ENCODE measurements at regions of chr5 and their contacts with region 1.

Region 1: DNA sequence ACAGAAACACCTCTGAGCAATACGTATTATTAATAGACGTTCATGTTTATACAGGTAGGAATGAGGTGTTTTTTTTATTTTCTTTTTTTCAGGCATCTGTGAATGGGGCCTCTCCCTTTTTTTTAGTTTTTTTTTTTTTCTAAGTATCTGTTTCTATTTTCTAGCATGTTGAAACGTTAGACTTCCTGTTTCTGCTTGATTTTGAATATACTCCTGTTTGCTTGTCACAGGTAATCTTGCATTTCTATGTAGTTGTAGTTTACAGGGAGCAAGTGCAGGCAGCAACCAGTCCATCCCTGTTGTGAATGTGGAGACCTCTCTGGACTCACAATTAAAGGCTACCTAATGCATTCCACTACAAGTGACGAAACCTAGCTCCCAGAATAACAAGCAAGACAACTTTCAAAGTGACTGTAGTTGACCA is 22.8 kb upstream of the TNFAIP8 start:
- DNase-seq: no peak
- ATAC-seq: no peak
- H3K4me3 ChIP-seq: no peak overlapping the region
- H3K27ac ChIP-seq: no peak overlapping the region
- H3K4me1 ChIP-seq: no peaks in the 10 kb centered on the region
- H3K27me3 ChIP-seq: no peaks in the 10 kb centered on the region
- CTCF ChIP-seq: no peak

Region 2: DNA sequence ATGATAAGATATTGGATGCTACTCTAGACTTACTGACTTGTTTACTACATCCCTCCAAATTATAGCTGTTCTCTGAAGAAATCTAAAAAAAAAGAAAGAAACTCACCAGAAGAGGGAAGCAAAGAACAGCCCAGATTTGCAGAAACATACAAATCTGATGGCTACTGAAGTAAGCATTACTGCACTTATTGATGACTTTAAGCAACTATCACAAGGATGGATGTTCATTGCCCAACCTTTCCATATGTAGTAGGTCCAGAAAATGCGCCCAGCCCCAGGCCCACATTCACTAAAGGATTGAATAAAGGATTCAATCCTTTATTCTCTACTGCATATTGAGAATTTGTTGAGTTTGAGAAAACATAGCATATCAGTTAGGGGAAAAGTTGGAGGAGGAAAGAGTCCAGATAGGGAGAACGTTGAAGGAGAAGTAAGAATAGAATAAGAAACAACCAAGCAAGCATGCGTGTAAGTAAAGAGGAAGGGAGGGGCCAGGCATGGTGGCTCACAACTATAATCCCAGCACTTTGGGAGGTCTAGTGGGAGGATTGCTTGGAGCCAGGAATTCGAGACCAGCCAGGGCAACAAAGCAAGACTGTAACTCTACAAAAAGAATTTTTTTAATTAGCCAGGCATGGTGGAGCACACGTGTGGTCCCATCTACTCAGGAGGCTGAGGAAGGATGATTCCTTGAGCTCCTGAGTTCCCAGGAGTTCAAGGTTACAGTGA is 310.8 kb before region 1 on chr5:
- CTCF ChIA-PET with region 1: interaction called, 6 read pairs
- POLR2A ChIA-PET with region 1: no interaction called
- in situ Hi-C with region 1: no loop called
- intact Hi-C with region 1: loop called (anchors 10 kb)
- DNase-seq: peak; percentile 30
- ATAC-seq: peak; percentile 60; the same call in 1 of the 2 replicates
- H3K4me3 ChIP-seq: no peak overlapping the region
- H3K27ac ChIP-seq: no peak overlapping the region
- H3K4me1 ChIP-seq: no peaks in the 10 kb centered on the region
- H3K27me3 ChIP-seq: no peaks in the 10 kb centered on the region
- CTCF ChIP-seq: peak; percentile 42; the same call in 1 of the 2 replicates

Region 3: DNA sequence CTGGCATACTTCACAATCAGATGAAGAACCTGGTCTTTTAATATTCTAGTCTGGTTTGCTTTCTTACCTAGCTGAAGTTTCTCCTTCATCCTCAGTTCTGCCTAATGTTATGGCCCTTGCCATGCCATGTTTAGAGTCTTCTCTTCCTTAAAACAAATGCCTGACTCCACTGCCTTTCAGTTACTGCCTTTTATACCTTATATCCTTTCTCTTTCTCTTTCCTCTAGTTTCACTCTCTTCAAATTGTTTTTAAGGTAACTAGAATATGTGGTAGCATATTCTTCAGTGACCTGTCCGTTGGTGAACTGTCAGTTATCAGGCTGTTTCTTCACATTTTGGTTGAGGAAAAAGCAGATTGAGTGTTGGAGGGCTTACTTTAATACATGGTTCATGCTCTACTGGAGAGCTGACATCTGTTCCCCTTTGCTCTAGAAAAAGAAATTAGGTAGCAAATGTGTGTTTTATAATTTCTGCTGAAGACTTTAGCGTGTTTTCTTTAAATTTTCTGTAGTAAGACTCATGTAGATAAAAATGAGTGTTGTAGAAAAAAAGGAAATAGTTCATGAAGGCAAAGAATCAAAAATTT is 158.3 kb before region 1 on chr5:
- CTCF ChIA-PET with region 1: no interaction called
- POLR2A ChIA-PET with region 1: no interaction called
- in situ Hi-C with region 1: no loop called
- intact Hi-C with region 1: no loop called
- DNase-seq: no peak
- ATAC-seq: no peak
- H3K4me3 ChIP-seq: no peak overlapping the region
- H3K27ac ChIP-seq: no peak overlapping the region
- H3K4me1 ChIP-seq: no peaks in the 10 kb centered on the region
- H3K27me3 ChIP-seq: no peaks in the 10 kb centered on the region
- CTCF ChIP-seq: no peak

Region 4: DNA sequence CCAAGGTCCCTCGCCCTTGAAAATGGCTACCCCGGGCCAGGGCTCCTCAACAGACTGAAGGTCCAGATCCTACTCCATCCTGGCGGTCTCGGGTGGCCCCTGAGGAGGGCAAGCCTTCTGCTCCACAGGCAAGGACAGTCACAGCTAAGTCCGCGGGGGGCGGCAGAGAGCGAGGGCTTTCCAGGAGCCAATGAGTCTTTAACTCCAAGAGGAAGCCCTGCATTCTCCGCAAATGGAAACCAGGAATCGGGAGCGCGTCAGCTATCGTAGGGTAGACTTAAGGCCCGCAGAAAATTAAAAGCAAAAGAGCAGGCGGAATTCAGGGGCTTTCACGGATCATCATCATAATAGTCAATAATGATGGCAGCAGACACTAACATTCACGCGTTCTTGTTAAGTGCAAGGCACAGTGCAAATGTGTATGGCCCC is 65.0 kb before region 1 on chr5:
- CTCF ChIA-PET with region 1: interaction called, 3 read pairs
- POLR2A ChIA-PET with region 1: no interaction called
- in situ Hi-C with region 1: no loop called
- intact Hi-C with region 1: loop called (anchors 2 kb)
- DNase-seq: peak; percentile 84
- ATAC-seq: peak; percentile 85
- H3K4me3 ChIP-seq: peak overlapping the region; percentile 73 to 97
- H3K27ac ChIP-seq: peak overlapping the region; percentile 30
- H3K4me1 ChIP-seq: no peaks in the 10 kb centered on the region; the same call in 1 of the 2 replicates
- H3K27me3 ChIP-seq: no peaks in the 10 kb centered on the region
- CTCF ChIP-seq: peak; percentile 83